Activated CD4-positive, alpha-beta T cell treated with anti-CD3 and anti-CD28 coated beads for 36 hours (primary cell): ENCODE measurements at regions of chr5 and their contacts with region 1.

Region 1: GRCh38 chr5:140058212-140058932 is 15.3 kb upstream of the NRG2 start:
- DNase-seq: no peak
- ATAC-seq: no peak
- H3K4me3 Mint-ChIP-seq: no peak overlapping the region
- H3K27ac Mint-ChIP-seq: no peak overlapping the region
- H3K4me1 Mint-ChIP-seq: no peaks in the 10 kb centered on the region
- H3K27me3 Mint-ChIP-seq: peaks cover 14% of the 10 kb centered on the region

Region 2: GRCh38 chr5:140038373-140038957 is 19.9 kb before region 1 on chr5:
- CTCF ChIA-PET with region 1: interaction called, 3 read pairs
- POLR2A ChIA-PET with region 1: no interaction called
- intact Hi-C with region 1: loop called in 1 of 2 experiments (anchors 2 kb)
- DNase-seq: no peak
- ATAC-seq: no peak
- H3K4me3 Mint-ChIP-seq: no peak overlapping the region
- H3K27ac Mint-ChIP-seq: no peak overlapping the region
- H3K4me1 Mint-ChIP-seq: peaks cover 7% of the 10 kb centered on the region
- H3K27me3 Mint-ChIP-seq: peaks cover 53% of the 10 kb centered on the region